ENCODE measurements at regions of chr11 and their contacts with region 1.

Region 1: GRCh38 chr11:67482825-67483798 is at the start of gene AIP:
- DNase-seq: peak; percentile 97
- ATAC-seq: peak; percentile 100
- H3K4me3 ChIP-seq: peak within 1 kb of the TSS; percentile 49
- H3K27ac ChIP-seq: peak within 1 kb of the TSS; percentile 69
- H3K4me1 ChIP-seq: peaks cover 3% of the 10 kb centered on the region; the same call in 1 of the 2 replicates
- H3K27me3 ChIP-seq: no peaks in the 10 kb centered on the region
- CTCF ChIP-seq: no peak
- POLR2A ChIP-seq: peak; percentile 77
- RAD21 ChIP-seq: no peak
- total RNA-seq, gene AIP: 91.4 and 95.5 TPM in 2 replicates

Region 2: DNA sequence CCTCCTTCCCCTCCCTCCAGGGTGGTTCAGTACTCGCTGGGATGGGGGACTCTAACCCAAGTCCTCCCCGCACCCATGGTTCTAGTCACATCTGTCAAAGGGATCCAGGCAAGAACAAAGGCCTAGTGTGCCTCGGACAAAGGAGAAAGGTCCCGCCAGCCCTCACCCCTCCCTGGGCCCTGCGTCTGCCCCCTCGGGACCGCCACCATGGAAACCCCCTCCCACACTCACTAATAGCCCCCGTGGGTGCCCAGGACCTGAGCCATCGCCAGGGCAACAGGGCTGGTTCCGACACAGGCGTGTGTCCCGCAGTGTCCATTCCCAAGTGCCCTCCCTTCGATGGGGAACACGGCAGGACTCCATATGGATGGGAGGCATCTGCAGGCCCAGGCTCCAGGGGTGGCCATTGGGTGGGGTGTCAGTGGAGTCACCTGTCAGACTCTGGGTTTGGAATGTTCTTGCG is 72.7 kb before region 1 on chr11:
- CTCF ChIA-PET with region 1: no interaction called
- POLR2A ChIA-PET with region 1: no interaction called
- dilution Hi-C with region 1: no loop called
- in situ Hi-C with region 1: no loop called
- intact Hi-C with region 1: no loop called
- DNase-seq: no peak
- ATAC-seq: no peak
- H3K4me3 ChIP-seq: no peak overlapping the region
- H3K27ac ChIP-seq: no peak overlapping the region
- H3K4me1 ChIP-seq: no peaks in the 10 kb centered on the region
- H3K27me3 ChIP-seq: peaks cover 61% of the 10 kb centered on the region
- CTCF ChIP-seq: no peak
- POLR2A ChIP-seq: no peak
- RAD21 ChIP-seq: no peak

Region 3: DNA sequence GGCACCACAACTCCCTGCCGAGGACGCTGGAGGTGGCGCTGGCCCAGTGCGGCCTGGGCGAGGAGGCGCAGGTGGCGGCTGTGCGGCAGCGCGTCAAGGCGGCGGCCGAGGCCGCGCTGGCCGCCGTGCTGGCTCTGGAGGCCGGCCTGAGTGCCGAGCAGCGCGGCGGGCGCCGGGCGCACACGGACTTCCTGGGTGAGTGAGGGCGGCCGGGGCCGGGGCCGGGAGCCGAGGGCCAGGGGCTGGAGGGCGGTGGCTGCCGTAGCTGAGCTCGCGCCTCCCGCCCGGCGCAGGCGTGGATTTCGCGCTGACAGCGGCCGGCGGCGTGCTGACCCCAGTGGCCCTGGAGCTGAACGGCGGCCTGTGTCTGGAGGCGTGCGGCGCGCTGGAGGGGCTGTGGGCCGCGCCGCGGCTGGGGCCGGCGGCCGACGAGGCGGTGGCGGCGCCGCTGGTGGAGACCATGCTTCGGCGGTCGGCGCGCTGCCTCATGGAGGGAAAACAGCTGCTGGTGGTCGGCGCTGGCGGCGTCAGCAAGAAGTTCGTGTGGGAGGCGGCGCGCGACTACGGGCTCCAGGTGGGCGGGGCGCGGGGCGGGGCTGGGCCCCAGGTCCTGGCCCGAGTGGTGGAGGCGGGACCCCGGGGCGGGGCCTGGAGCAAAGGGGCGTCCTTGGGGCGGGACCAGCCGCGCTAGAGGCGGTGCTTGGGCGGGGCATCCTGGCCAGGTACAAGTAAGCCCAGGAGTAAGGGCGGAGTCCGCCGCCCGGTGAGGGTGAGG is 62.3 kb before region 1 on chr11:
- CTCF ChIA-PET with region 1: interaction called, 3 read pairs
- POLR2A ChIA-PET with region 1: no interaction called
- dilution Hi-C with region 1: no loop called
- in situ Hi-C with region 1: no loop called
- intact Hi-C with region 1: loop called (anchors 5 kb)
- DNase-seq: peak; percentile 80
- ATAC-seq: peak; percentile 99
- H3K4me3 ChIP-seq: peak overlapping the region; percentile 55
- H3K27ac ChIP-seq: peak overlapping the region; percentile 53; the same call in 1 of the 2 replicates
- H3K4me1 ChIP-seq: peaks cover 5% of the 10 kb centered on the region; the same call in 1 of the 2 replicates
- H3K27me3 ChIP-seq: no peaks in the 10 kb centered on the region
- CTCF ChIP-seq: no peak
- POLR2A ChIP-seq: no peak; the same call in 1 of the 2 replicates
- RAD21 ChIP-seq: no peak

Measured in IMR-90 (cell line).